Panc1 (cell line): ENCODE measurements at regions of chr6 and their contacts with region 1.

Region 1: GRCh38 chr6:136792410-136793262 is at the start of gene MAP3K5:
- DNase-seq: no peak
- ATAC-seq: peak; percentile 91
- H3K4me3 ChIP-seq: peak within 1 kb of the TSS; percentile 74 to 90
- H3K27ac ChIP-seq: peak within 1 kb of the TSS; percentile 87
- H3K4me1 ChIP-seq: peaks cover 19% of the 10 kb centered on the region
- H3K27me3 ChIP-seq: no peaks in the 10 kb centered on the region
- CTCF ChIP-seq: peak; percentile 93
- total RNA-seq, gene MAP3K5: 8.1 TPM

Region 2: GRCh38 chr6:136582711-136583471 is 209.7 kb before region 1 on chr6:
- CTCF ChIA-PET with region 1: no interaction called
- POLR2A ChIA-PET with region 1: no interaction called
- in situ Hi-C with region 1: no loop called
- intact Hi-C with region 1: loop called (anchors 2 kb)
- DNase-seq: no peak
- ATAC-seq: peak; percentile 70; the same call in 1 of the 2 replicates
- H3K4me3 ChIP-seq: no peak overlapping the region
- H3K27ac ChIP-seq: no peak overlapping the region
- H3K4me1 ChIP-seq: no peaks in the 10 kb centered on the region
- H3K27me3 ChIP-seq: no peaks in the 10 kb centered on the region
- CTCF ChIP-seq: peak; percentile 66; the same call in 1 of the 2 replicates

Region 3: DNA sequence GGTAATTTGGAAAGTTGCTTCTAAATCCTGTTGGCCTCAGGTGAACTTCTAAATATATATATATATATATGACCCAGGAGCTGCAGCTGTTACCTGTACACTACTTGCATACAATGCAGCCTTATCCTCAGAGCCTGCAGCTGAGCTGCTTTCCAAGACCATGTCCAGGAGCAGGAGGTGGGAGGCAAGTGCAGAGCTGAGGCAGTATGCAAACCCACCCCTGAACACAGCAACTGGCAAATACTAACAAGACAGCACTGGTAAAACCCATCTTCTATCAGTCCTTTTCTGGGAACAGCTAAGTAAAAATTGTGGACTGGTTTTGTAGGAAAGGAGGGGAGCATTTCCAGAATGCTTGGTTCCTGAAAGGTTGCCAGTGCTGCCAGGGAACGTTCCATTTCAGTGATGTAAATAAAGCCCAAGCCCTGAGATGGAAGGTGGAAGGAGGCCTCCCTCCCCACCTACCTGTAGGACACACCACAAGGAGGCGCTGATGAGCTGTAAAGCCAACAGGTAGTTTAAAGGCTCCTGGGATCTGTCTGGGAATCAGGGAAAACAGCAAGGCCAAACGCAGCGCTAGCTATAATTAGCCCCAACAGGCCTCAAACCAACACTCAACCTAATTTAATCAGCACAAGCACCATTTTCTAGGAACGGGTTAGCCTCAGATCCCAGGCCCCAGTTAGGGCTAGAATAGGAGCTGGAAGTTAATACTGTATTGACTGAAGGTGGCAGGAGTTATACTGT is 148.6 kb before region 1 on chr6:
- CTCF ChIA-PET with region 1: interaction called, 114 read pairs
- POLR2A ChIA-PET with region 1: interaction called, 5 read pairs
- in situ Hi-C with region 1: no loop called
- intact Hi-C with region 1: loop called (anchors 1 kb)
- DNase-seq: peak; percentile 75
- ATAC-seq: peak; percentile 99
- H3K4me3 ChIP-seq: no peak overlapping the region
- H3K27ac ChIP-seq: no peak overlapping the region
- H3K4me1 ChIP-seq: no peaks in the 10 kb centered on the region
- H3K27me3 ChIP-seq: no peaks in the 10 kb centered on the region
- CTCF ChIP-seq: peak; percentile 93